Aorta (tissue), 5 donors: ENCODE measurements at regions of chr16 and their contacts with region 1.

Region 1: GRCh38 chr16:14405611-14406537 is 224.2 kb downstream of the PARN start:
- DNase-seq: peak in 1 of 2 donors; percentile 85
- ATAC-seq: peak; percentile 42
- H3K4me3 ChIP-seq: no peak overlapping the region
- H3K27ac ChIP-seq: no peak overlapping the region
- H3K4me1 ChIP-seq: no peaks in the 10 kb centered on the region
- H3K27me3 ChIP-seq: no peaks in the 10 kb centered on the region

Region 2: GRCh38 chr16:14501331-14502255 is 95.7 kb after region 1 on chr16:
- intact Hi-C with region 1: loop called in 1 of 2 experiments (anchors 10 kb)
- DNase-seq: peak; percentile 92 to 95
- ATAC-seq: peak; percentile 94
- H3K4me3 ChIP-seq: no peak overlapping the region
- H3K27ac ChIP-seq: peak overlapping the region; percentile 51 to 79
- H3K4me1 ChIP-seq: peaks cover 10 to 13% of the 10 kb centered on the region in 2 donors
- H3K27me3 ChIP-seq: no peaks in the 10 kb centered on the region